ENCODE measurements at regions of chr21 and their contacts with region 1.

Region 1: GRCh38 chr21:45590246-45590725 is 48.0 kb upstream of the SLC19A1 start:
- DNase-seq: peak; percentile 84
- H3K4me3 Mint-ChIP-seq: peak overlapping the region; percentile 52
- H3K27ac Mint-ChIP-seq: no peak overlapping the region
- H3K4me1 Mint-ChIP-seq: peaks cover 34% of the 10 kb centered on the region
- H3K27me3 Mint-ChIP-seq: peaks cover 9% of the 10 kb centered on the region

Region 2: GRCh38 chr21:45287438-45288391 is 302.6 kb before region 1 on chr21 and contains the start of gene POFUT2:
- CTCF ChIA-PET with region 1: no interaction called
- intact Hi-C with region 1: no loop called
- DNase-seq: peak; percentile 98
- H3K4me3 Mint-ChIP-seq: peak within 1 kb of the TSS; percentile 76
- H3K27ac Mint-ChIP-seq: no peak within 1 kb of the TSS
- H3K4me1 Mint-ChIP-seq: peaks cover 13% of the 10 kb centered on the region
- H3K27me3 Mint-ChIP-seq: no peaks in the 10 kb centered on the region
- total RNA-seq, gene POFUT2: 14.4 to 15.9 TPM

Region 3: DNA sequence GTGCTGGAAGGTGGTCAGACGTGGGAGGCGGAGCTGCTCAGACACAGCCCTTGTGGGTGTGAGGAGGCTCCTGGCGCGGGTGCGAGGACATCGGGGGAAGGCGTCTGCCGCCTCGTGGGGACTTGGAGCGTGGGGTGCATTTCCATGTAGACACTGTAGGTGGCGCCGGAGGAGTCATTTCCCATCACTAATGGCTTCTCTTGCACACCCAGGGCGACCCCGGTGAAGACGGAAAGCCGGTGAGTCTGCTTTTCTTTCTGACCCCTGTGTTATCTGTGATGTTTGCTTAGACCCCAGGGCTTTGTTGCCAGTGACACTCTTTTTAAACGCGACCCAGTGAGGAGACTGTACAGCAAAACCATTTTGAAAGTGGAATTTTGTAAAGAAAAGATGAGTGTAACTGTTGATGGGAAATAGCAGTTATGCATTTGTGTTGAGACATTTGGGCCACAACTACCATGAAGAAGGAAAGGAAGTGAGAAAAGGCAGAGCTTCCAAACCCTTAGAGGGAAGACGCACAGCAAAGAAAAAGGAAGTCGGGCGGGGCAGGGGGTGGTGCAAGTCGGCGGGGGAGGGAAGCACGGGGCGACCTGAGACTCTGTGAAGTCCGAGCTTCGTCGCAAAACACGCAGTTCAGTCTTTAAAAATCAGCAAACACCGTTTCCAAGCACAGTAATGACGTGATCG is 112.0 kb before region 1 on chr21:
- CTCF ChIA-PET with region 1: no interaction called
- intact Hi-C with region 1: loop called (anchors 1 kb)
- DNase-seq: peak; percentile 90
- H3K4me3 Mint-ChIP-seq: peak overlapping the region; percentile 71
- H3K27ac Mint-ChIP-seq: peak overlapping the region; percentile 94
- H3K4me1 Mint-ChIP-seq: peaks cover 30% of the 10 kb centered on the region
- H3K27me3 Mint-ChIP-seq: no peaks in the 10 kb centered on the region

Region 4: GRCh38 chr21:45542242-45542666 is 48.0 kb before region 1 on chr21 and contains the start of gene SLC19A1:
- CTCF ChIA-PET with region 1: no interaction called
- intact Hi-C with region 1: loop called (anchors 2 kb)
- DNase-seq: peak; percentile 68
- H3K4me3 Mint-ChIP-seq: peak within 1 kb of the TSS; percentile 74
- H3K27ac Mint-ChIP-seq: peak within 1 kb of the TSS; percentile 77
- H3K4me1 Mint-ChIP-seq: peaks cover 22% of the 10 kb centered on the region
- H3K27me3 Mint-ChIP-seq: no peaks in the 10 kb centered on the region
- total RNA-seq, gene SLC19A1: 32.2 to 33.0 TPM

Region 5: DNA sequence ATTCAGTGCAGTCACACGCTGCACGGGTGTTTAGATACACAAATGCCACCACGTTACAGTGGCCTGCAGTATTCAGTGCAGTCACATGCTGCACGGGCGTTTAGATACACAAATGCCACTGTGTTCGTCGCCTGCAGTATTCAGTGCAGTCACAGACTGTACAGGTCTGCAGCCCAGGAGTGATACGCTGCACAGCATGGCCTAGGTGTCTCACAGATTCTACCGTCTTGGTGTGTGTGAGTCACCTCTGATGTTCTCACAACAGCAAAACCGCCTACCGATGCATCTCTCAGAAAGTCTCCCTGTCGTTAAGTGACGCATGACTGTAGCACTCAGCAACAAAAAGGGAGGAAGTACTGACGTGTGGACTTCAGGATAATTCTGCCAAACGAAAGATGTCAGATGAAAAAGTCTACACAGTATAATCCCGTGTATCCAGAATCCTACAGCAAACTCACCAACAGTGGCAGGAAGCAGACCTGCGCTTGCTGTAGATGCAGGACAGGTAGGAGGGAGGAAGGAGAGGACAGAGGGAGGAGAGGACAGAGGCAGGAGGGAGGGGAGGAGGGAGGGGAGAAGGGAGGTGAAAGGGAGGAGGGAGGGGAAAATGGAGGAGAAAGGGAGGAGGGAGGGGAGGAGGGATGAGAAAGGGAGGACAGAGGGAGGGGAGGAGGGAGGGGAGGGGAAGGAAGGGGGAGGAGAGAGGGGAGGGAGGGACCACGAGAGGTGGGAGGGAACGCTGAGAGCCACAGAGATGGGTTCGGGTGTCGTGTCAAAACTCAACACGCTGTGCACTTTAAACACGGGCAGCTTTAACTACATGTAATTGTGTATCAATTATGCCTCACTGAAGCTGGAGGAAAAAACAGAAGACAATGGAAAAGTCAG is 17.0 kb after region 1 on chr21:
- CTCF ChIA-PET with region 1: interaction called, 3 read pairs
- intact Hi-C with region 1: loop called (anchors 1 kb)
- DNase-seq: peak; percentile 71
- H3K4me3 Mint-ChIP-seq: peak overlapping the region; percentile 38
- H3K27ac Mint-ChIP-seq: peak overlapping the region; percentile 78
- H3K4me1 Mint-ChIP-seq: peaks cover 6% of the 10 kb centered on the region
- H3K27me3 Mint-ChIP-seq: no peaks in the 10 kb centered on the region

Region 6: DNA sequence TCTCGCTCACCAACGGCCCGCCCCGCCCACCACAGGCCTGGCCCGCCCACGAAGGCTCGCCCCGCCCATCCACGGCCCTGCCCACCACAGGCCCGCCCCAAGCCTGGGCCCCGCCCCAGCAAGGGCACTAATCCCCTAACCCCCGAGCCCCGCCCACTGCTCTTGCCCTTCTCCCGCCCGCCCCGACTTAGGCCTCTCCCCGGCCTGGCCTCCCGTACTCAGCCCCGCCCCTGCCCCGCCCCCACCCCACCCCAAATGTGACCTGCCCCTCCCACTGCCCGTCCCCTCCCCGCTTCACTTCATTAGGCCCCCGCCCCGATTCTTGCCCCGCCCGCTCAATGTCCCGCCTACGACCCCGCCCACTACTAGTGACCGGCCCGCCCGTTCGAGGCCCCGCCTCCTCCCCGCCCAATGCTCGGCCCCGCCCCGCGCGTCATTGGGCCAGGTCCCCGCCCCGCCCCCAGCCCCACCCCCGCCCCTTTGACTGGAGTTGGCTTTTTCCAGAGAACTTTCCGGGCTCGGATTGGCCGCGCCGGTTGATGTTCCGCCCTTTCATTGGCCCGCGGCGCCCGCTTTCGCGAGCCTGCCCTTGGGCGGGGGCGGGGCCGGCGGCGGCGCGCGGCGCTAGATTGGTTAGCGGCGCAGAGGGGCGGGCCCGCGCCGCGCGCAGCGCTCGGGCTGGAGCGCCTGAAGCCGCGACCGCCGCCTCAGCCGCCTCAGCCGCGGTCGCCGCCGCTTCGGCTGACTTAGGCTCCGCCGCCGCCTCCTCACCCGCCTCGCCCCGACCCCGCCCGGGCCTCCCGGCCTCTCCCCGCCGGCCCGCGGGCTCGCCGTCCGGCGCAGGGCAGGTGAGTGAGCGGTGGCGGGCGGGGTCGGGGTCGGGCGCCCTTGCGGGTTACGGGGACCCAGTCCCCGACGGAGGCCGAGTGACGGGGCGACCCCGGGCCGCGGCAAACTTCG is 53.0 kb after region 1 on chr21 and contains the start of gene PCBP3:
- CTCF ChIA-PET with region 1: no interaction called
- intact Hi-C with region 1: loop called (anchors 1 kb)
- DNase-seq: peak; percentile 99
- H3K4me3 Mint-ChIP-seq: peak within 1 kb of the TSS; percentile 76
- H3K27ac Mint-ChIP-seq: no peak within 1 kb of the TSS
- H3K4me1 Mint-ChIP-seq: peaks cover 46% of the 10 kb centered on the region
- H3K27me3 Mint-ChIP-seq: peaks cover 5% of the 10 kb centered on the region
- total RNA-seq, gene PCBP3: 10.0 to 10.2 TPM

Region 7: GRCh38 chr21:45670731-45671130 is 80.4 kb after region 1 on chr21:
- CTCF ChIA-PET with region 1: no interaction called
- intact Hi-C with region 1: no loop called
- DNase-seq: no peak
- H3K4me3 Mint-ChIP-seq: no peak overlapping the region
- H3K27ac Mint-ChIP-seq: no peak overlapping the region
- H3K4me1 Mint-ChIP-seq: peaks cover 2% of the 10 kb centered on the region
- H3K27me3 Mint-ChIP-seq: no peaks in the 10 kb centered on the region

Region 8: GRCh38 chr21:45698493-45699184 is 108.4 kb after region 1 on chr21:
- CTCF ChIA-PET with region 1: no interaction called
- intact Hi-C with region 1: loop called (anchors 1 kb)
- DNase-seq: peak; percentile 56
- H3K4me3 Mint-ChIP-seq: no peak overlapping the region
- H3K27ac Mint-ChIP-seq: peak overlapping the region; percentile 79
- H3K4me1 Mint-ChIP-seq: peaks cover 38% of the 10 kb centered on the region
- H3K27me3 Mint-ChIP-seq: no peaks in the 10 kb centered on the region

Region 9: DNA sequence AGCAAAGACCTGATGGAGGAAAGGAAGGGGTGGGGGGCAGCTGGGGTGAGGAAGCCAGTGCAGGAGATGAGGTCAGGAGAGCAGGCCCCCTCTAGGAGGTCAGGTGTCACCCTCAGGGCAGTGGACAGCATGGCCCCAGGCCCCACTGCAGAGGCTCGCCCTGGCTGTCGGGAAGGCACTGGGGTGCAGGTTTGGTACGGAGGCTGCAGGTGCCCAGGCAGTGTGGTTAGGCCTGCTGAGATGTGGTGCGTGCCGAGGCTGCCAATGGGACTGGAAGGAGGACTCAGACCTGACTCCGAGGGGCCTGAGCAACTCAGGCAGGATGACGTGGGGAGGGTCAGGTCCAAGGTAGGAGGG is 135.5 kb after region 1 on chr21:
- CTCF ChIA-PET with region 1: no interaction called
- intact Hi-C with region 1: no loop called
- DNase-seq: no peak
- H3K4me3 Mint-ChIP-seq: no peak overlapping the region
- H3K27ac Mint-ChIP-seq: no peak overlapping the region
- H3K4me1 Mint-ChIP-seq: peaks cover 9% of the 10 kb centered on the region
- H3K27me3 Mint-ChIP-seq: no peaks in the 10 kb centered on the region

Region 10: GRCh38 chr21:45768751-45769070 is 178.4 kb after region 1 on chr21:
- CTCF ChIA-PET with region 1: no interaction called
- intact Hi-C with region 1: loop called (anchors 2 kb)
- DNase-seq: peak; percentile 66
- H3K4me3 Mint-ChIP-seq: peak overlapping the region; percentile 43
- H3K27ac Mint-ChIP-seq: peak overlapping the region; percentile 95
- H3K4me1 Mint-ChIP-seq: peaks cover 46% of the 10 kb centered on the region
- H3K27me3 Mint-ChIP-seq: no peaks in the 10 kb centered on the region

Measured in activated naive CD4-positive, alpha-beta T cell treated with anti-CD3 and anti-CD28 coated beads for 36 hours (primary cell).